Mammary epithelial cell (primary cell): ENCODE measurements at regions of chr4 and their contacts with region 1.

Region 1: DNA sequence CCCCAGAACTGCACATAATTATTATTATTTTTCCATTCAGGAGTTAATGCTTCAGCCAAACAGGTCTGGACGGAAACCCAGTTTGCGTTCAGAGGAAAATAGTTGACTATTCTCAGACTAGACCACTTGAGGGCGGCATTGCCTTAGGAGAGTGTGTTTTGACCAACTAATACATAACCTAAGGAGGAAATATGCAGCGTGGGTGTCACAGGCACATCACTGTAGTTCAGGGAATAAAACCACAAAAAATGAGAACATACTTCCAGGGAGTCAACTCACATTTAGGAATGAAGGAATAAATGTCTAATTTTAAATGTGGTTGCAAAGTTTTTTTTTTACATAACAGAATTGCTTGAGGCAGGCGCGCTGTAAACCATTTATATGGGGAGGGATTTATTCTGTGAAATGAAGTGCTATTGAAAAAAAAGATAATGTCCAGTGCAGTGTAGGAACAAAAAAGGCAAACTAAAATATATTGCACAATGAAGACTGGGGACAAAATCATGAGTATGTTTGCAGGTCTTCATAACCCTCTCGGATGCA is 93.3 kb downstream of the SYNPO2 start:
- DNase-seq: peak; percentile 79
- H3K4me3 ChIP-seq: no peak overlapping the region
- H3K27ac ChIP-seq: no peak overlapping the region
- H3K4me1 ChIP-seq: peaks cover 23% of the 10 kb centered on the region
- H3K27me3 ChIP-seq: no peaks in the 10 kb centered on the region
- CTCF ChIP-seq: peak; percentile 74 to 77

Region 2: DNA sequence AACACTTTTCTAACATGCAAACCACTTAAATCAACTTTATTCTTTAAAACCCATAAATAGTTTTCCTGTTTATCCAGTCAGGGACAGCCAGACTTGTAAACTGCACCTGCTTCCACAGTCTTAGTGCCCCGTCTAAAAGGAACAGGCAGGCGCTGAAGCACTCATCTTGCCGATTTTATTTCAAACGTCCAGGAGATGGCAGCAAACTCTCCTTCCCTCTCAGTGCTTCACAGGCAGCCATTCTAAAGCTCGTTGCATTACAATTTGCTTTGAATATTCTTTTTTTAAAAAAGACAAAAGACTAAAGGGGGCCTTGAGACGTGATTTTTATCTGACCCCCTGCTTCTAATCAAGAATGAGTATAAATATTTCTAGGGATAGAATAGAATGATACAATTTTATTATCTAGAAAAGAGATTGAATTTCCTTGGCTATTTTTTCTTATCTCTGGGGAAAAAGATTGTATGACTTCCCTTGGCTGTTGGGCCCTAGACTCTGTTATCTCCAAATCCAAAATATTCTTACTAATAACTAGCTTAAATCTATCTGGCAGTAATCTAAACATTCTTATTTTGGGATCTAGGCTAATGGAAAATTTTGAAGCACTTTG is 60.1 kb after region 1 on chr4:
- CTCF ChIA-PET with region 1: no interaction called
- dilution Hi-C with region 1: no loop called
- in situ Hi-C with region 1: no loop called
- intact Hi-C with region 1: loop called (anchors 1 kb)
- DNase-seq: peak; percentile 68
- H3K4me3 ChIP-seq: no peak overlapping the region
- H3K27ac ChIP-seq: no peak overlapping the region
- H3K4me1 ChIP-seq: peaks cover 18% of the 10 kb centered on the region
- H3K27me3 ChIP-seq: no peaks in the 10 kb centered on the region
- CTCF ChIP-seq: peak; percentile 58 to 74

Region 3: GRCh38 chr4:119212234-119212963 is 230.5 kb after region 1 on chr4 and contains the start of gene USP53:
- CTCF ChIA-PET with region 1: no interaction called
- dilution Hi-C with region 1: no loop called
- in situ Hi-C with region 1: loop called in 1 of 2 experiments (anchors 10 kb)
- intact Hi-C with region 1: no loop called
- DNase-seq: peak; percentile 99
- H3K4me3 ChIP-seq: peak within 1 kb of the TSS; percentile 79 to 99 (median 82)
- H3K27ac ChIP-seq: peak within 1 kb of the TSS; percentile 100
- H3K4me1 ChIP-seq: peaks cover 29% of the 10 kb centered on the region
- H3K27me3 ChIP-seq: no peaks in the 10 kb centered on the region
- CTCF ChIP-seq: peak in 1 of 2 donors; percentile 0
- total RNA-seq, gene USP53: 41.1 to 62.0 TPM

Region 4: DNA sequence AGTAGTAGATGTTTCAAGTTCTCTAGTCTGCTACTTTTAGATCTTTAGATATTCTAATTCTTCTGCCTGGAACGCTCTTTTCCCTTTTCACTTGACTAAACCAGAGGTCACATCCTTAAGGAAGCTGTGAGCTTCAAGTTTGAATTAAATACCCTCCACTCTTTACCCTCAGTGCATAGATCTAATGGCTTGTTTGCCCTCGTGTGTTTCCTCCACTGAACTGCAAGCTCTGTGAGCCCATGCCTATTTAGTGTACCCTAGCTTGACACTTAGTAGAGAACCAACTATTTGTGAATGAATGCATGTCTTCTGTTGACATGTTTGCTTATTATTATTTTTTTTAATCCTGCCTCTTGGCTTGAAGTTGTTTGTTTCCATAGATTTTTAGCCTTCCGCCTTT is 508.4 kb after region 1 on chr4:
- CTCF ChIA-PET with region 1: no interaction called
- dilution Hi-C with region 1: no loop called
- in situ Hi-C with region 1: no loop called
- intact Hi-C with region 1: loop called (anchors 2 kb)
- DNase-seq: no peak
- H3K4me3 ChIP-seq: no peak overlapping the region
- H3K27ac ChIP-seq: no peak overlapping the region
- H3K4me1 ChIP-seq: no peaks in the 10 kb centered on the region
- H3K27me3 ChIP-seq: no peaks in the 10 kb centered on the region
- CTCF ChIP-seq: peak in 1 of 2 donors; percentile 27

Region 5: DNA sequence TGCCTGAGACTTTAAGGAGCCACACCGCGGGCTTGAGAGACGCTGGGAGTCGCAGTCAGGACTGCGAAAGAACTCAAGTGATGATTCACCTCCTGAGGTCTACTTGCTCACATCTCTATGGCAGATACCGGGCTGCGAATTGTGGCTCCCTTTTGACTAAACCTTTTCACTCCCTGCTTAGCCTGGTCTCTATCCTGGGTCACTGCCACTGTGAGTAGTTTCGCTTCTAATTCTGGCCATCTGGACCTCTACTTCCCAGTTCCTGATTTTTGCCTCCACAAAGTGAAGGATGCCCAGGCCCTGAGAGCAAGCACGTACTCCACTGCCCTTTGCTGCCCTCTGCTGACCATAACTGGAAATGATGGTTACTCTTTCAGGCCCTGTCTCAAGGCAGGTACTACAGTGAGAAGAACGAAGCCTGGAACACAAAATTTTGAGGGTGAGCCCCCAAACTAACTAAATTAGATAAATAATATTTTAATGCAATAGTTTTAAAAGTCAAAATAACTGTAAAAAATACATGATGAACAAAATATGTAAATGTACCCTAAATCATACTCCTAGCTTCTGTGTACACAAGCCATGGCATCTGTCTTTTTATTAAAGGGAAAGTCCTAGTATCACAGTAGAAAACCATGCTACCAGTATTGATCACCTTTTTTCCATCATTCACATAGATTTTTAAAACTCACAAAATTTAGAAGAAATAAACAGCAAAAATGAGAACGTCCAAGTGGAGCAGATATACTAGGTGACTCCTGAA is 1068.0 kb after region 1 on chr4:
- CTCF ChIA-PET with region 1: no interaction called
- dilution Hi-C with region 1: no loop called
- in situ Hi-C with region 1: no loop called
- intact Hi-C with region 1: loop called (anchors 1 kb)
- DNase-seq: peak; percentile 61
- H3K4me3 ChIP-seq: no peak overlapping the region
- H3K27ac ChIP-seq: no peak overlapping the region
- H3K4me1 ChIP-seq: no peaks in the 10 kb centered on the region
- H3K27me3 ChIP-seq: no peaks in the 10 kb centered on the region
- CTCF ChIP-seq: peak; percentile 87 to 88